Ascending aorta (tissue), 2 donors: ENCODE measurements at regions of chr10 and their contacts with region 1.

Region 1: DNA sequence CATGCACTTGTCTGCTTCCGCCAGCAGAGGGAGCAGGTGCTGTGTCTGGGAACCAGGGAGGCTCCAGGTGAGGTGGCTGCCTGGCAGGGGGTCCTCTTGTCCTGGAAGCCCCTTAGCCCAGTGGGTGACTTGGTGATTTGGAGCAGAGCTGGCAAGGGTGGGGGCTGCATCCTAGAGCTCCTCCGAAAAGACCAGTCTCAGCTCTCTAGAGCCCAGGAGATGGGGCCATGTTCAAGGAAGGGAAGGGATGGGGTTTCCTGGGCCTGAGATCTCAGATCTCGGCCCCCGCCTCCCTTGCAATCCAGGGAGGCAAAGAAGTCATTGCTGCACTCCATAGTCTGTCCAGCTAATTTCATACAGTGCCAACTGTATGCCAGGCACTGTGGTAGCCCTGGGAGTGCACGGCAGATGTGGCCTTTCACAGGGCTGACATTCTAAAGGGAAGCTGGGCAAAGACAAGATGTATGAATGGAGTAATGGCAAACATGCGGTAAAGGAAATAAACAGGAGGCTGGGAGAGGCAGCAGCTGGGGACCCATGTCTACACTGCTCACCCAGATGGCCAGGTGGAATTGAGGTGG is 20.4 kb upstream of the SFRP5 start:
- DNase-seq: peak in 1 of 2 donors; percentile 72
- H3K4me3 ChIP-seq: no peak overlapping the region
- H3K27ac ChIP-seq: no peak overlapping the region
- H3K4me1 ChIP-seq: no peaks in the 10 kb centered on the region
- H3K27me3 ChIP-seq: peaks cover 4% of the 10 kb centered on the region
- CTCF ChIP-seq: peak; percentile 78 to 91 (median 80)

Region 2: GRCh38 chr10:97365761-97366351 is 426.4 kb before region 1 on chr10:
- intact Hi-C with region 1: no loop called
- DNase-seq: no peak
- H3K4me3 ChIP-seq: no peak overlapping the region
- H3K27ac ChIP-seq: no peak overlapping the region
- H3K4me1 ChIP-seq: no peaks in the 10 kb centered on the region
- H3K27me3 ChIP-seq: no peaks in the 10 kb centered on the region
- CTCF ChIP-seq: no peak

Region 3: GRCh38 chr10:97869091-97870042 is 77.1 kb after region 1 on chr10:
- intact Hi-C with region 1: loop called (anchors 1 kb)
- DNase-seq: peak; percentile 55 to 89
- H3K4me3 ChIP-seq: peak overlapping the region in 1 of 2 donors; percentile 14
- H3K27ac ChIP-seq: no peak overlapping the region
- H3K4me1 ChIP-seq: peaks cover 0 to 7% of the 10 kb centered on the region in 2 donors
- H3K27me3 ChIP-seq: no peaks in the 10 kb centered on the region
- CTCF ChIP-seq: peak; percentile 80 to 93 (median 81)

Region 4: DNA sequence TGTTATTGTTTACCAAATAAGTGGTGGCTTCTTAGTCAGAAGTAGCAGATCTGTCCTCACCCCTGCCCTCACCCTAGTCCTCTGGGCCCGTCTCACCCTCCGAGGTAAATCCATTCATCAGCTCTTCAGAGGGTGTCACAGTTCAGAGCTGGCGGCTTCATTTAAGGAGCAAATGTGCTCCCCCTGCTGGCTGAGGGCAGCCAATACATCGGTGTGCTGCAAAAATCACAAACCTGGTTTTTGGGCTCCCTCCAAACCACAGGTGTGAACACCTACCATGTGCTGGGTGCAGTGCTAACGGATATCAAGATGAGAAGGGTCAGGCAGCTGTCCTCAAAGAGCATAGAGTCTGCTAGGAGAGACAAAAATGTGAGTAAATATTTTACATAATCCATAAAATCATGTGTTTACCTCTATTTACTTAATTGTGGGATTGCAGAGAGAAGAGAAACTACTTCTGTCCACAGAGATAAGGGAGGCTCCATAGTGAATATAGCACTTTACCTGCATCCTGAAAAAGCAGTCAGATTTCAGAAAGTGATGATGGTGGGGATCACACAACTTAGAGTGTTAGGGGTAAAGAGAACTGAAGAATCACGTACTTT is 253.7 kb after region 1 on chr10:
- intact Hi-C with region 1: loop called (anchors 5 kb)
- DNase-seq: peak in 1 of 2 donors; percentile 68
- H3K4me3 ChIP-seq: no peak overlapping the region
- H3K27ac ChIP-seq: no peak overlapping the region
- H3K4me1 ChIP-seq: no peaks in the 10 kb centered on the region
- H3K27me3 ChIP-seq: no peaks in the 10 kb centered on the region
- CTCF ChIP-seq: peak; percentile 39 to 79 (median 75)